Activated T-helper 2 cell treated with anti-CD3 and anti-CD28 coated beads, Interferon-gamma antibody, Interleukin-2, Interleukin-4, amounts not matched to agents 10 μg/mL and 5 μg/mL and 100 μg/mL, durations not matched to agents 14 hours and 24 hours and 36 hours (primary cell): ENCODE measurements at regions of chr1 and their contacts with region 1.

Region 1: DNA sequence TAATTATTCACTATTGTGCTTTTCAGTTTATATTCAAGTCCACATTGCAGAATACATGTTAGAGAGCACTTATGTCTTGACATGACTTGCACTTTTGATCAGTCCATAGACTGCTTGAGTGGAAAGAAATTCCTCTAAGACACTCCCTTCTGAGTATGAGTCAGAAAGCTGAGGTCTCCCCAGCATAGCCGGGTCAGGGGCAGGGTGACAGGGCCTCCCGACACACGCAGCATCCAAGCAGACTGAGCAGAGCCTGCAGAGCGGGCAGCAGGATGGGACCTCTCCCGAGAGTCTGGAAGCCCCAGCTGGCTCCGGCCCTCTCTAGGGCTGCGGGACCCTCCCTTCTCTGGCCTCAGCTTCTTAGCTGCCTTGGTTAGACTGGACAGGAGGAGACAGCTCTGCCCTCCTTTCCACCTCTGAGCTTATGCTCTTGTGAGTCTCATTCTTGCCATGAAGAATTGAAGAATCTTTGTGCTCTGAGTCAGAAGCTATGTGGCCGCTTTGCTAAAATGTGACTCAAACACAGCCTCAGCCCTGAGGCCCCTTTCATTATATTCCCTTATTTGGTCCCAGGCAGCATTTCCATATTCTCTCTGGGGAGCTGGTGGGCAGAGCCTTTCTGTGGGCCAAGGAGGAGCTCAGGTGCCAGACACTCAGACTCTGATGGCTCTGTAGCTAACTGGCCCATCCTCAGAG is 11.2 kb upstream of the CAPN2 start:
- DNase-seq: no peak
- H3K4me3 Mint-ChIP-seq: no peak overlapping the region
- H3K27ac Mint-ChIP-seq: peak overlapping the region; percentile 87
- H3K4me1 Mint-ChIP-seq: peaks cover 45% of the 10 kb centered on the region
- H3K27me3 Mint-ChIP-seq: no peaks in the 10 kb centered on the region

Region 2: GRCh38 chr1:223726380-223727001 is 25.4 kb after region 1 on chr1:
- intact Hi-C with region 1: loop called (anchors 1 kb)
- DNase-seq: peak; percentile 79
- H3K4me3 Mint-ChIP-seq: peak overlapping the region; percentile 72
- H3K27ac Mint-ChIP-seq: peak overlapping the region; percentile 97
- H3K4me1 Mint-ChIP-seq: peaks cover 64% of the 10 kb centered on the region
- H3K27me3 Mint-ChIP-seq: no peaks in the 10 kb centered on the region

Region 3: GRCh38 chr1:223748773-223749733 is 48.0 kb after region 1 on chr1:
- intact Hi-C with region 1: loop called (anchors 1 kb)
- DNase-seq: peak; percentile 45
- H3K4me3 Mint-ChIP-seq: peak overlapping the region; percentile 53
- H3K27ac Mint-ChIP-seq: peak overlapping the region; percentile 7
- H3K4me1 Mint-ChIP-seq: peaks cover 15% of the 10 kb centered on the region
- H3K27me3 Mint-ChIP-seq: no peaks in the 10 kb centered on the region

Region 4: GRCh38 chr1:223831755-223832636 is 130.9 kb after region 1 on chr1:
- intact Hi-C with region 1: loop called (anchors 5 kb)
- DNase-seq: no peak
- H3K4me3 Mint-ChIP-seq: peak overlapping the region; percentile 54
- H3K27ac Mint-ChIP-seq: peak overlapping the region; percentile 92
- H3K4me1 Mint-ChIP-seq: peaks cover 24% of the 10 kb centered on the region
- H3K27me3 Mint-ChIP-seq: no peaks in the 10 kb centered on the region